PC-9 (cell line): ENCODE measurements at regions of chr7 and their contacts with region 1.

Region 1: DNA sequence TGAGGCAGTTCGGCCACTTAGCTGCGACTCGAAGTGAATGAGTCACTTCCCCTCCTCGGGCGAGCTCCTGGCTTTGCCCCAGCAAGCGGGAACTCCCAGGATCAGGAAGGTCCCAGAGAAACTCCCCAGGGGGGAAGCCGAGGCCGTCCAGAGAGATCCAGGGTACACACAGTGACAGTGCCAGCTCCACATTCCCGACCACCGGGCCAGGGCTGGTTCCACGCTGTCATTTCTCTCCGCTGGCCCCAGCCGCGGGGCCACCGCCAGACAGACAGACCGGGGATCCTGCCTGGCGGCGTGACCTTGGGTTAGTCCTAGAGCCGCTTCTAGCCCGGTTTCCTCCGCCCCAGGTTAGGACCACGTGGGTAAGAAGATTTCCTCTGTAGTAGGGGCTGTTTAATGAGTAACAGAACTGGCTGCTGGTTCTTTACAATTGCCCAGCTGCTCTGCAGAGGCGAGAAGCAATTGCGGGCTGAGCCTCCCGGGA is 463 bp upstream of the UPP1 start:
- DNase-seq: peak; percentile 93
- H3K4me3 ChIP-seq: peak overlapping the region; percentile 73
- H3K27ac ChIP-seq: peak overlapping the region; percentile 98
- H3K4me1 ChIP-seq: peaks cover 76% of the 10 kb centered on the region
- H3K27me3 ChIP-seq: no peaks in the 10 kb centered on the region
- CTCF ChIP-seq: no peak

Region 2: DNA sequence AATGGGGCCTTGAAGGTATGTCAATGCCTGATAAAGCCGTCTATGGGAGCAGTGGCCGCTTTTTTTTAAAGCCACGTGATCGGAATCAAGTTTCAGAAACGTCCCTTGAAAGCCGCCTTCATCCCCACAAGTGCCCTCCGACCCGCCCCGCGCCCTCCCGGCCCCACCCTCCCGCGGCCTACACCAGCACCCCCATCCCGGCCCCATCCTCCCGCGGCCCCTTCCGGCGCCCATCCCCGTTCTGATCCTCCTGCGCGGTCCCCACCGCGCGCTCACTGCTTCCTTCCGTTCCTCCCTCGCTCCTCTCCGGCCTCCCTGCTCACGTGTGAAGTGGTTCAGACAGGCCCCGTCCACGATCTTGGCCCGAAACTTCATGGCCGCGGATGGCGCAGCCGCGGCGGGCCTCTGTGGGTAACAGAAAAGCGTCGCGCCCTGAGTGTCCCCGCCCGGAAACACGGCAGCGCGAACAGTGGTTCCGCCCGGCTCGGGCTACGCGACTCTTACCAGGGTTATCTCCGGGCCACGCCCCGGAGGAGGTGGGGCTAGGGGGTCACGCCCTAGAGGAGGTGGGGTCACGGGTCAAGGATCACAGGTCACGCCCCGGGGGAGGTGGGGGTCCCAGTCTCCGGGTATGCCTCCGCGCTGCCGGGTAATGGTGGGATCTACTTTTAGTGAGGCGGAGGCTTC is 109.3 kb before region 1 on chr7 and contains the start of gene HUS1:
- CTCF ChIA-PET with region 1: no interaction called
- POLR2A ChIA-PET with region 1: no interaction called
- intact Hi-C with region 1: loop called (anchors 1 kb)
- DNase-seq: peak; percentile 81 to 86
- H3K4me3 ChIP-seq: peak within 1 kb of the TSS; percentile 89
- H3K27ac ChIP-seq: peak within 1 kb of the TSS; percentile 71
- H3K4me1 ChIP-seq: peaks cover 11% of the 10 kb centered on the region
- H3K27me3 ChIP-seq: no peaks in the 10 kb centered on the region
- CTCF ChIP-seq: no peak
- total RNA-seq, gene HUS1: 28.4 and 43.5 TPM in 2 replicates

Region 3: DNA sequence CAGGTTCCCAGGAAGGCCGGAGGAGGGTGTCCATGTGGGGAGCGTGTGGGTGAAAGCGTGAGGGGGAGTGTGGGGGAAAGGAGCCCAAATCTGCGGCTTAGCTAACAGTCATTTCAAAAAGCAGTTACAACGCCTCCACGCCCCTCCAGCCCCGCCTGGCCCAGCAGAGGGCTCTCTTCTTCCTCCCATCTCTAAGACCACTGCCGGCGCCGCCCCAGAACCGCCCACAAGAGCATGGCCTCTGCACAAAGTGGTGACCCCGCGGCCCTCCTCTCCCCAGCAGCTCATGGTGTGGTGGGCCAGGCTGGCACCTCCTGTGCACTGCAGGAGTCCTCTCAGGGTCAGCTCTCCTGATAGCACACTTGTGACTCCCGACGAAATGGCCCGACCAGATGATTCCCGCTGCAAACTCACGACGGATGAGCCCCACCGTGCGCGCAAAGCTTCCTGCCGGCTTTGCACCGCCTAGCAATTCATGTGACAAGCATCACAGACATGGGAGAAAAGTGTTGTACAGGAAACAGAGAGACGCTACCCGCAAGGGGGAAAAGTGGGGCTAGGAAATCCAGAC is 96.8 kb before region 1 on chr7:
- CTCF ChIA-PET with region 1: interaction called, 10 read pairs
- POLR2A ChIA-PET with region 1: no interaction called
- intact Hi-C with region 1: loop called (anchors 1 kb)
- DNase-seq: peak; percentile 66 to 87
- H3K4me3 ChIP-seq: peak overlapping the region; percentile 61
- H3K27ac ChIP-seq: peak overlapping the region; percentile 43
- H3K4me1 ChIP-seq: peaks cover 9% of the 10 kb centered on the region
- H3K27me3 ChIP-seq: no peaks in the 10 kb centered on the region
- CTCF ChIP-seq: peak; percentile 81

Region 4: GRCh38 chr7:48035301-48035966 is 53.2 kb before region 1 on chr7 and contains the start of gene C7orf57:
- CTCF ChIA-PET with region 1: no interaction called
- POLR2A ChIA-PET with region 1: no interaction called
- intact Hi-C with region 1: loop called (anchors 2 kb)
- DNase-seq: peak; percentile 71 to 91
- H3K4me3 ChIP-seq: peak within 1 kb of the TSS; percentile 59
- H3K27ac ChIP-seq: no peak within 1 kb of the TSS
- H3K4me1 ChIP-seq: peaks cover 4% of the 10 kb centered on the region; the same call in 1 of the 2 replicates
- H3K27me3 ChIP-seq: peaks cover 18% of the 10 kb centered on the region
- CTCF ChIP-seq: no peak; the same call in 1 of the 2 replicates
- total RNA-seq, gene C7orf57: 0.90 and 2.5 TPM in 2 replicates

Region 5: DNA sequence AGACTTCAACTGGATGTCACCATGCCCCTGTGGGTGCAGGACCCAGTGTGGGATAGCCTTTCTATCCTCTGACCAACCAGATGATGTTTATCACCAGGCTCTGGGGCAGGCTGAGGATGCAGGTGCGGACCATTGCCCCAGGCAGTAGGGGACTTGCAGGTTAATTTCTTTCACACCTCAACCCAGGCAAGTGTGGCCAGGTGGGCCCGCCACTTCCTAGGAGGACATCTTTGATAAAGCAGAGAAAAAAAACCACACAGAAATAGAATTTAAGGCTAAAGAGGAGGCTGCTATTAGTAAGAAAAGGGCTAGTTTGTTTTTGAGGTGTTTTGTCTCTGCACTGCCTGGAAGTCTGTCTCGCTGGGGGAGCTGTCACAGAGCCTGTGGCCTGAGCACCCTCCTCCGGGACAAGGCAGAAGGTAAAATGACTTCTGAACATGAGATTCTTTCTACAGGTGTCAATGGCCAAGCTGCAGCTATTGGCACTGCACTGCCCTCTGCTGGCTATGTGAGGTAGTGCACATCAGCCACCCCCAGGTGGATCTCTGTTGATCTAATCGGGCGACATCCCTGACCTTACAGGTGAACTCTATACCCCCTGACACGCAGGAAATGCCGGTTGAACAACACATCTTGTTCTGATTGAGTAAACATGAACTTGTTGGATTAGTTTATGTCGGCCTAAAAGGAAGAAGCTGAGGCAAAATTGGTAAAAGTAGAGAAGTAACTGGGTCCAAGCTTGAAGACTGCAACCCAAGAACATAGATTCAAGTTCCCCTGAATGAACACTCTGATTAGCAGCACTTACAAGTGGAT is 21.5 kb after region 1 on chr7:
- CTCF ChIA-PET with region 1: interaction called, 4 read pairs
- POLR2A ChIA-PET with region 1: interaction called, 3 read pairs
- intact Hi-C with region 1: loop called (anchors 1 kb)
- DNase-seq: peak; percentile 95 to 96
- H3K4me3 ChIP-seq: peak overlapping the region; percentile 6; the same call in 1 of the 2 replicates
- H3K27ac ChIP-seq: peak overlapping the region; percentile 9
- H3K4me1 ChIP-seq: peaks cover 40% of the 10 kb centered on the region
- H3K27me3 ChIP-seq: no peaks in the 10 kb centered on the region
- CTCF ChIP-seq: peak; percentile 100

Region 6: DNA sequence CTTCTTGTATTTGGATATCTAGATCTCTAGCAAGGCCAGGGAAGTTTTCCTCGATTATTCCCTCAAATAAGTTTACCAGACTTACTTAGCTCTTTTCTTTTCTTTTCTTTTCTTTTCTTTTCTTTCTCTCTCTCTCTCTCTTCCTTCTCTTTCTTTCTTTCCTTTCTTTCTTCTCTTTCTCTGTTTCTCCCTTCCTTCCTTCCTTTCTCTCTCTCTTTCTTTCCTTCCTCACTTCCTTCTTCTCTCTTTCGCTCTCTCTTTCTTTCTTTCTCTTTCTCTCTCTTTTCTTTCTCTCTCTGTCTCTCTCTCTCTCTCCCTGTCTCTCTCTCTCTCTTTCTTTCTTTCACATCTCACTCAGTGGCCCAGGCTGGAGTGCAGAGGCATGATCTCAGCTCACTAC is 37.4 kb after region 1 on chr7:
- CTCF ChIA-PET with region 1: no interaction called
- POLR2A ChIA-PET with region 1: no interaction called
- intact Hi-C with region 1: no loop called
- DNase-seq: no peak
- H3K4me3 ChIP-seq: no peak overlapping the region
- H3K27ac ChIP-seq: no peak overlapping the region
- H3K4me1 ChIP-seq: no peaks in the 10 kb centered on the region
- H3K27me3 ChIP-seq: 0 out of 2 replicates have a peak, but pooled peaks cover 3% of the 10 kb centered on the region
- CTCF ChIP-seq: no peak

Region 7: DNA sequence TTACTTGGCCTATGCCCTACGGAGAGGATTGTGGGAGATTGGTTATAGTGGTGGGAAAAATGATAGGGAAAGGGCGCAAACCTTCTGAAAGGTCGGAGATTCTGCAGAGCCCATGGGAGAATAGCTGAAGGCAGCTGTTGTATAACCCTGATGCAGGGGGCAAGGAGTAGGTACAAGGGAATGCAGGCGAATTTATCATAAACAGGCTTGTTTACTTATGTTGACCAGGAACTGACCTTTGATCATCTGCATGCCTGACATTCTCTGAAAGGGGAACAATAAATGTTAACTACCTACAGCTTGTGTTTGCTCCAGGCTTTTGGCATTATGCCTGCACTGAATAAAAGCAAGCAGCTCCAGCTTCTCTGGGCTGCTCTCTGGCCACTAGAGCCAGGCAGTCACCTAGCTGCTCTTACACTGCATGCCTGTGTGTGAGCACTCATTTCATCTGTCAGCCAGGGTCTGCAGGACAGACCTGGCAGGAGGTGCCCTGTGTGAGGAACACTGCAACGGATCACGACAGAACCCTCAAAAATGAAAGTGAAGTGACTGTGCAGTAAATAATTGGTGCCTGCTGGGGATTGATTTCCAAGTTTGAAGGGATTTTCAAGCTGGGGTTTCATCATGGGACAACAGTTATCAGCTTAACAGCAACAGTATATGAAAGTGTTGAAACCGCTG is 51.5 kb after region 1 on chr7:
- CTCF ChIA-PET with region 1: no interaction called
- POLR2A ChIA-PET with region 1: interaction called, 4 read pairs
- intact Hi-C with region 1: loop called (anchors 5 kb)
- DNase-seq: peak; percentile 72 to 98
- H3K4me3 ChIP-seq: no peak overlapping the region; the same call in 1 of the 2 replicates
- H3K27ac ChIP-seq: no peak overlapping the region
- H3K4me1 ChIP-seq: peaks cover 37% of the 10 kb centered on the region
- H3K27me3 ChIP-seq: peaks cover 6% of the 10 kb centered on the region; the same call in 1 of the 2 replicates
- CTCF ChIP-seq: no peak